Testis (tissue), 5 donors: ENCODE measurements at regions of chr10 and their contacts with region 1.

Region 1: DNA sequence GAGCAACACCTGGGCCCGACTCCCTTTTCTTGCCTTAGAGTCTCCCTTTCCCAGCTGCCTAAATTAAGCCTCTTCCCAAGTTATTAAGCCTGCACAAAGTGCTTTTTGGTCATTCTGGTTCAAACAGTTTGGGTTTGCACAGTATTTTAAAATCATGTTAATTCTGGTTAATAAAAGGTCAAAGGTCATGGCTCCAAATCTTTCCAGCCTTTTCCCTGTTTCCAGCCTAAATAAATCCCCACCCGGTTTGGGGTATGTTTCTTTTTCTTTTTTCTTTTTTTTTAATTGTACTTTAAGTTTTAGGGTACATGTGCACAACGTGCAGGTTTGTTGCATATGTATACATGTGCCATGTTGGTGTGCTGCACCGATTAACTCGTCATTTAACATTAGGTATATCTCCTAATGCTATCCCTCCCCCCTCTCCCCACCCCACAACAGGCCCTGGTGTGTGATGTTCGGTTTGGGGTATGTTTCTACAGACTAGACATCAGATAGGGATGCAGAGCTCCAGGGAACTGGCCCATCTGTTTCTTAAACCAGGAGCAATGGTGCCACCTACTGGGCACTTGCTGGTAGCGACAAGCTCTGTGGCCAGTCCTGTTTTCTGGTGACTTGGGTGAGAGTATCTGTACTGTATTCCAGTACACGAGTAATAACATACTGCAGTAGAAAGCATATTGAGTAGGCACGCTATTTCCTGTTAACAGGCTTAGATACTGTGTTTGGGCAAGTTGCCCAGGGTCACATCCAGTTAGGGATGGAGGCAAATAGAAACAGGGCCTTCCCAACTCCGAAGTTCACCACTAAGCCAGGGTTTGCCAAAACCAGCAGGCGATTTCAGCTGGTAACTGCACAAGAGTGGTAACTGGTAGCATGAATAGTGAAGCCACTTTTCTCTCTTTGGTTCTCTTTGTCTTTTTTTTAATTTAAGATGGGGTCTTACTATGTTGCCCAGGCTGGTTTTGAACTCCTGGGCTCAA is 60.6 kb upstream of the TRIM8 start:
- DNase-seq: peak; percentile 95
- H3K4me3 ChIP-seq: no peak overlapping the region
- H3K27ac ChIP-seq: no peak overlapping the region
- H3K4me1 ChIP-seq: peaks cover 48% of the 10 kb centered on the region
- H3K27me3 ChIP-seq: no peaks in the 10 kb centered on the region
- CTCF ChIP-seq: peak; percentile 75 to 82 (median 81)
- POLR2A ChIP-seq: no peak

Region 2: GRCh38 chr10:102140928-102141540 is 442.7 kb before region 1 on chr10:
- intact Hi-C with region 1: no loop called
- DNase-seq: no peak
- H3K4me3 ChIP-seq: no peak overlapping the region
- H3K27ac ChIP-seq: no peak overlapping the region
- H3K4me1 ChIP-seq: no peaks in the 10 kb centered on the region
- H3K27me3 ChIP-seq: no peaks in the 10 kb centered on the region
- CTCF ChIP-seq: no peak
- POLR2A ChIP-seq: no peak

Region 3: DNA sequence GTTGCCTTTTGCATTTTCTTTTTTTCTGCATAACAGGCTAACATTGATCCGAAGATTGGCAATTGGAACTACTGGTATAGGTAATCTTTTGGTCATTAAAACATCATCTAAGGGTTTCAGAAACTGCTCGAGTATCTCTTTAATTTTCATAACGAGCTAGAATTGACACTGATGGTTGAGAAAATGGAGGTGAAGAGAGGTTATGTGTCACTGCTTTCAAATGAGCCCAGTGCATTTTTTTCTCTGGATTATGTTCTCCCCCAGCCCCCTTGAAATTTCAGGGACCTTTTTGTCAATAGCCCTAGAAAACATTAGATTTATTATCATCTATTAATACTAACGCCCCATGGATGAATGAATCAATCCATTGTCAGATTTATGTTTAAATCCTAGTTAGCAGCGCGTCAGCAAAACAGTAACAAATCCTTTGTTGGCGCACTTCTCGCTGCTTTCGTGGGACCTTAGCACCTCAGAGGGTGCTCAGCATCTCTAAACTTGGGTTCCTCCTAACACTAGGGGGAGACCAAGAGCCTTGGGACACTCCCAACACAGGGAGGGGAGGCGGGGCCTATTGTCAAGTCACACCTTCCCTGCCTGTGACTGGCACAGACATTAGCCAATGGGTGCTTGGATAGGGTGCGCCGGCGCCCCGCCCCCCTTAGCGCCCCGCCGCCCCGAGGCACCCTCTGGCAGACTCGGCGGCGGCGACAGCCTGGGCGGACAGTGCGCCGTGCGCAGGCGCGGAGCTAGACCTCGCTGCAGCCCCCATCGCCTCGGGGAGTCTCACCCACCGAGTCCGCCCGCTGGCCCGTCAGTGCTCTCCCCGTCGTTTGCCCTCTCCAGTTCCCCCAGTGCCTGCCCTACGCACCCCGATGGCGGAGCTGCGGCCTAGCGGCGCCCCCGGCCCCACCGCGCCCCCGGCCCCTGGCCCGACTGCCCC is 80.2 kb before region 1 on chr10 and contains the start of gene SUFU:
- intact Hi-C with region 1: loop called (anchors 5 kb)
- DNase-seq: peak; percentile 100
- H3K4me3 ChIP-seq: peak within 1 kb of the TSS; percentile 95 to 98
- H3K27ac ChIP-seq: peak within 1 kb of the TSS; percentile 80 to 96
- H3K4me1 ChIP-seq: peaks cover 18% of the 10 kb centered on the region
- H3K27me3 ChIP-seq: no peaks in the 10 kb centered on the region
- CTCF ChIP-seq: peak; percentile 87 to 96 (median 89)
- POLR2A ChIP-seq: peak; percentile 51
- total RNA-seq, gene SUFU: 16.5 to 22.9 TPM